Heart left ventricle (tissue), 16 donors: ENCODE measurements at regions of chr1 and their contacts with region 1.

Region 1: GRCh38 chr1:90919900-90920299 is 101.9 kb downstream of the ZNF644 start:
- DNase-seq: no peak
- ATAC-seq: peak; percentile 71 to 87 (median 80)
- H3K4me3 ChIP-seq: no peak overlapping the region
- H3K27ac ChIP-seq: peak overlapping the region in 9 of 12 donors; percentile 17 to 64 (median 45)
- H3K4me1 ChIP-seq: peaks cover 0 to 59% (median 50%) of the 10 kb centered on the region in 12 donors
- H3K27me3 ChIP-seq: no peaks in the 10 kb centered on the region
- CTCF ChIP-seq: no peak
- POLR2A ChIP-seq: no peak

Region 2: GRCh38 chr1:90761781-90762589 is 157.9 kb before region 1 on chr1:
- intact Hi-C with region 1: no loop called
- DNase-seq: no peak
- ATAC-seq: no peak
- H3K4me3 ChIP-seq: no peak overlapping the region
- H3K27ac ChIP-seq: no peak overlapping the region
- H3K4me1 ChIP-seq: no peaks in the 10 kb centered on the region
- H3K27me3 ChIP-seq: peaks cover 0 to 53% (median 10%) of the 10 kb centered on the region in 9 donors
- CTCF ChIP-seq: no peak
- POLR2A ChIP-seq: no peak

Region 3: DNA sequence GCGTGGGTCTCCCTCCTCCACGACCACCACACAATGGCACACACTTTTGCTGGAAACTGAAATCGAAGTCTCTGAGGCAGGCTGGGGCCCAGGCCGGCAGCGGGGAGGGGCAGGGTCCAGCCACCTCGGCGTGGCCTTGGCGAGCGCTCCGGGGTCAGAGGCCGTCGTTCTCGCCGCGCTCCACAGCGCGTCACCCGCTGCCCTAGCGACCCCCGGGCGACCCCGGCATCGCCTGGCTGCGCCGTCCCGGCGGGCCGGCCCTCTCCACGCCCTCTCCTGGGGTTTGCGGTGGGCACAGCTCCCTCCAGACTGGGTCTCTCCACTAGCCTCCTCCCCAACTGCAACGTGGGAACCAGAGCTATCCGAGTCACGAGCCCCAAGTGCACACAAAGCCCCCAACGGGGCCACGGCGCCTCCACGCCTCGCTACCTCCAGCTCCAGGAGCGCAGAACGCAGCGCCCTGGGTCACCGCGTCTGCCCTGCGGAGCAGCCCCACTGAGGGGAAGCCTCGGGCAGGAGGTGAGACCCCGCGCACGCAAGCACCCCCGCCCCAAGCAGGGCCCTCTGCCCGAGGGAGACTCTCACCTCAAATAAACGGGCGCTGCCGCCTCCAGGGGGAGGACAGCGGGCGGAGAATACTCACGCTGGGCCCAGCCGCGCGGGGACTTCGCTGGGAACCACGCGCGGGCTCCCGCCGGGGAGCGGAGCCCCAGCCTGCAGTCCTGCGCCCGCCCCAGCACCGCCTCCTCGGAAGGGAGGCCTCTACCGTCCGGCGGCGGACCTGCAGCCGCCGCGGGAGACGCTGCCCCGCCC is 68.8 kb before region 1 on chr1:
- intact Hi-C with region 1: loop called in 1 of 10 experiments (anchors 10 kb)
- DNase-seq: peak; percentile 83 to 90 (median 85)
- ATAC-seq: peak; percentile 92 to 100 (median 98)
- H3K4me3 ChIP-seq: peak overlapping the region; percentile 57 to 96 (median 83)
- H3K27ac ChIP-seq: peak overlapping the region in 9 of 12 donors; percentile 2 to 76 (median 60)
- H3K4me1 ChIP-seq: peaks cover 0 to 13% (median 0%) of the 10 kb centered on the region in 12 donors
- H3K27me3 ChIP-seq: peaks cover 0 to 10% (median 0%) of the 10 kb centered on the region in 9 donors
- CTCF ChIP-seq: peak; percentile 60 to 94 (median 88)
- POLR2A ChIP-seq: peak in 1 of 2 donors; percentile 41